ENCODE measurements at regions of chr7 and their contacts with region 1.

Region 1: DNA sequence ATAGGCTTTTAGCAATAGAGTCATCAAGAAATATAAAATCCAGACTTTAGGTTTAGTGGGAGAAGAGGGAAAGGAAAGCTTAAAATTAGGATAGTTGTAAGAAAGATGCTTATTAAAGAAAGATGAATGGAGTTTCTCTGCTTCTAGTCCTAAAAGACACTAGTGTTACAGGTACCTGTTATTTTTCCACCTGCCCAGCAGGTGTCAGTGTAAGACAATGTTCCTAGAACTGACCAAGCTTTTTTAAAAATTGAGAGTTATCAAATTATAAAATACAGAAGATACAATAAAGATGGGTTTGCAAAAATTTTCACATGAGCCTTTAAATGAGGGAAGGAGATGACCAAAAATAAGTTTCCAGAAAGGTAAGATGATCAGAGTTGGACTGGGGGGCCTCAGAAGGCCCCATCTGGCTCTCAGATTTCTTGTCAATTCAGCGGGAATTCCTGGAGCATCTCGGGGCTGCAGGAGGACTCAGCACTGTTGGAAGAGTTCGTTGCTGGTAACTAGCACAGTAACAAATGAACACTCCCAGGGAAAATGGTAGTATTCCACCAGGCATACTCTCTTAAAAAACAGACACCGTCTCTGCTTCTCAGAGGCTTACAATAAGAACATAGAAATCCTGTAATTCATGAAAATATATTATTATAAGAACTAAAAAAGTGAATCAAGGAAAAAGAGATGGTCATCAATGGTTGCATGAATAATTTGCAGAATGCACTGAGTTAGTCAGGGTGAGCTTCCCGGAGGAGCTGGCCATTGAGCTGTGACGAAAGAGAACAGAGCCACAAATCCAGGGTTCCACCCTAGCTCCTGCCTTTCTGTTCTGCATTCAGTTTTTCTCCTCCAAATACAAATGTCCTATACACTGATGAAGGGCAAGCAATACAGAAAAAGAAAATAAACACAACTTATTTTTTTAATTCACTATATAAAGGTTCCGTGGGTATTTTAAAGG is 71.8 kb upstream of the PIK3CG start:
- DNase-seq: no peak
- ATAC-seq: peak; percentile 80
- H3K4me3 Mint-ChIP-seq: no peak overlapping the region
- H3K27ac Mint-ChIP-seq: no peak overlapping the region
- H3K4me1 Mint-ChIP-seq: peaks cover 3% of the 10 kb centered on the region; the same call in 1 of the 2 replicates
- H3K27me3 Mint-ChIP-seq: no peaks in the 10 kb centered on the region
- CTCF ChIP-seq: peak; percentile 40

Region 2: DNA sequence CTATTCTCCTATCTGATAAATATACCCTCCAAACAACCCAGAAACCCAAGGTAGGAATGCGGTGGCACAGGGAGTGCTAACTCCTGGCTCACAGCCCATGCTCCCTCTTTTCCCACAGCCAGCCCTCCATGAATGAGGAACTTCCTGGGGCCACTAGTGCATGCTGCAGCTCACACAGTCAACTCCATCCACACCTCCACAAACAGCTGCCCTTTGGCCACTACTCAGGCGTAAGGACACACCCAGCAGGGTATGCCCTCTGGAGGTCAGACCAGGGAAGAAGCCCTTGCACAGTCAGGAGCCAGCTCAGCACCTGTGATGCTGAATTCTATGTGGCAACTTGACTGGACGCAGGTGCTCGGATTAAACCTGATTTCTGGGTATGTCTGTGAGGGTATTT is 13.4 kb before region 1 on chr7:
- CTCF ChIA-PET with region 1: interaction called, 10 read pairs
- POLR2A ChIA-PET with region 1: no interaction called
- DNase-seq: peak; percentile 64
- ATAC-seq: peak; percentile 100
- H3K4me3 Mint-ChIP-seq: no peak overlapping the region
- H3K27ac Mint-ChIP-seq: no peak overlapping the region
- H3K4me1 Mint-ChIP-seq: peaks cover 9% of the 10 kb centered on the region; the same call in 1 of the 2 replicates
- H3K27me3 Mint-ChIP-seq: no peaks in the 10 kb centered on the region
- CTCF ChIP-seq: no peak

Region 3: DNA sequence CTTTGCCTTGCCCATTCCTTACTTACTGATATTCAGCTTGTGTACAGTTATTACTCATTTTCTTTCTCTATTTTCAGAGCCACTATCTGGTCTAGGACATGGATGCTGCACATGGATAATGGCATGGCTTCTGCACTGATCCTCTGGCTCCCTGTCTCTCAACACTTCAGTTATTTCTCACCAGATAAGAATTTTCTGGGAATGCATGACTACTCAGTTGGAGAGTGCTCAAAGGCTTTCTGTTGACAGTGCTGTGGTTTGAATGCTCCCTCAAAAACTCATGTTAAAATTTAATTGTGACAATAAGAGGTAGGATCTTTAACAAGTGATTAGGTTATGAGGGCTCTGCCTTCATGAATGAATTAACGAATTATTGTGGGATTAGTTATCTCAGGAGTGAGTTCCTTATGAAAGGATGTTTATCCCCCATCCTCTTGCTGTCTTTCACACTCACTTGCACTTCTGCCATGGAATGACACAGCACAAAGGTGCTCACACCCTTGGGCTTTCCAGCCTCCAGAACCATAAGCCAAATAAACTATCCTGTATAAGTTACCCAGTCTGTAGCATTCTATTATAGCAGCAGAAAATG is 55.7 kb after region 1 on chr7:
- CTCF ChIA-PET with region 1: no interaction called
- POLR2A ChIA-PET with region 1: no interaction called
- DNase-seq: no peak
- ATAC-seq: no peak
- H3K4me3 Mint-ChIP-seq: no peak overlapping the region
- H3K27ac Mint-ChIP-seq: no peak overlapping the region
- H3K4me1 Mint-ChIP-seq: peaks cover 10% of the 10 kb centered on the region
- H3K27me3 Mint-ChIP-seq: no peaks in the 10 kb centered on the region; the same call in 1 of the 2 replicates
- CTCF ChIP-seq: no peak

Region 4: GRCh38 chr7:107138696-107139420 is 345.6 kb after region 1 on chr7:
- CTCF ChIA-PET with region 1: no interaction called
- POLR2A ChIA-PET with region 1: no interaction called
- DNase-seq: no peak
- ATAC-seq: no peak
- H3K4me3 Mint-ChIP-seq: no peak overlapping the region
- H3K27ac Mint-ChIP-seq: no peak overlapping the region
- H3K4me1 Mint-ChIP-seq: peaks cover 5% of the 10 kb centered on the region
- H3K27me3 Mint-ChIP-seq: no peaks in the 10 kb centered on the region
- CTCF ChIP-seq: no peak

Region 5: GRCh38 chr7:107725151-107725740 is 932.0 kb after region 1 on chr7:
- CTCF ChIA-PET with region 1: no interaction called
- POLR2A ChIA-PET with region 1: no interaction called
- DNase-seq: peak; percentile 22
- ATAC-seq: no peak
- H3K4me3 Mint-ChIP-seq: no peak overlapping the region
- H3K27ac Mint-ChIP-seq: no peak overlapping the region
- H3K4me1 Mint-ChIP-seq: peaks cover 6% of the 10 kb centered on the region
- H3K27me3 Mint-ChIP-seq: peaks cover 8% of the 10 kb centered on the region
- CTCF ChIP-seq: peak; percentile 58

Measured in WTC11 (cell line).